Sciatic nerve (tissue), 2 donors: ENCODE measurements at regions of chr6 and their contacts with region 1.

Region 1: GRCh38 chr6:11373208-11373607 is 140.7 kb upstream of the NEDD9 start:
- DNase-seq: no peak
- ATAC-seq: no peak

Region 2: DNA sequence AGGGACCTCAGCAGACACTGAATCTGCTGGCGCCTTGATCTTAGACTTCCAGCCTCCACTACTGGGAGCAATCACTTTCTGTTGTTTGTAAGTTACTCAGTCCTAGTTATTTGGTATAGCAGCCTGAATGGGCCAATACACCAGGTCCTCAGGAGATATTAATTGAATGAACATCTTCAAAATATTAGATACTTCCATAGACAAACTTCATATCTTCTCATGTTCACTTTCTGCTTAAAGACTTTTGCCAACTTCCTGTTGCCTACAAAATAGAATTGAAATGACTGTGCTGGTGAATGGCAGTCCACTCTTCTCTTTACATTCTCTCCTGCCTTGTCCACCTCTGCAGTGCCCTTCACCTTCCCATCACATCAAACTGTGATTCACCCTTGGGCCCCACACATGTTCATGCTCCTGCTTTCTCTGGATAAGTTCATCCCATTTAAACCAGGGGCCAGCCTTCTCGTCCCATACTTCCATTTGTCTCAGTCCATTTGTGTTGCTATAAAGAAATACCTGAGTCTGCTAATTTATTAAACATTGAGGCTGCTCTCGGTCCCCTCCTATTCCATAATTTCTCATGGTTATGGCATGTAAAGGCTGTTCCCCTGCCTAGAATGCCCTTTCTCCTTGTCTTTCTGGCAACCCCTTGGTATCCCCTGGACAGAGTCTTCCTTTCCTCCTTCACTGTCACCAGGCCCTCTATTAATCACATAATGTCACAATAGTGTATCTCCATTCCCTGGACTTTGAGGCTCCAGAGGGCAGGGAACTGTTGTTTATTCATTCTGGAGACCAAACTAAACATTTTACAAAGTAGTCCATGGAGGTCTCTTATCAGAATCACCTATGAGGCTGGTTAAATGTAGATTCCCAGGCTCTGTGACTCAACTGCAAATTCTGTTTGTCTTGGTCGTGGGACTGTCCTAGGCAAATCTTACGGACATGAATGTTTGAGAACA is 16.1 kb after region 1 on chr6:
- intact Hi-C with region 1: loop called (anchors 1 kb)
- DNase-seq: no peak
- ATAC-seq: no peak

Region 3: DNA sequence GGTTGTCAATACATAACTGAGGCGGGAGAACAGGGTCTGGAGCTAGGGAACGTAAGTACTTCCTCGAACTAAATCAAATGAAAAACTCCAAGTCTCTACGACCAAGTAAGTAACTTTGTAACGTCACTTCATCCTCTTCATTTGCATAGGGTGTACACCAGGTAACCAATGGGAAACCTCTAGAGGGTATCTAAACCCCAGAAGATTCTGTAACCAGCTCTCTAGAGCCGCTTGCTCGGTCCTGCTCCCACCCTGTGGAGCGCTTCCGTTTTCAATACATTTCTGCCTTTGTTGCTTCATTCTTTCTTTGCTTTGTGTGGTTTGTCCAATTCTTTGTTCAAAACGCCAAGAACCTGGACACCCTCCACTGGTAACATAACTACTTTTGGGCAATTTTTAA is 30.9 kb after region 1 on chr6:
- intact Hi-C with region 1: no loop called
- DNase-seq: no peak
- ATAC-seq: no peak